ENCODE measurements at regions of chr19 and their contacts with region 1.

Region 1: GRCh38 chr19:11798391-11799330 is at the start of gene ZNF491:
- DNase-seq: peak; percentile 95 to 96
- H3K4me3 ChIP-seq: peak within 1 kb of the TSS; percentile 65 to 82
- H3K27ac ChIP-seq: peak within 1 kb of the TSS; percentile 80 to 84
- H3K4me1 ChIP-seq: peaks cover 0 to 20% (median 13%) of the 10 kb centered on the region in 4 donors
- H3K27me3 ChIP-seq: no peaks in the 10 kb centered on the region
- CTCF ChIP-seq: peak in 1 of 2 experiments; percentile 15

Region 2: DNA sequence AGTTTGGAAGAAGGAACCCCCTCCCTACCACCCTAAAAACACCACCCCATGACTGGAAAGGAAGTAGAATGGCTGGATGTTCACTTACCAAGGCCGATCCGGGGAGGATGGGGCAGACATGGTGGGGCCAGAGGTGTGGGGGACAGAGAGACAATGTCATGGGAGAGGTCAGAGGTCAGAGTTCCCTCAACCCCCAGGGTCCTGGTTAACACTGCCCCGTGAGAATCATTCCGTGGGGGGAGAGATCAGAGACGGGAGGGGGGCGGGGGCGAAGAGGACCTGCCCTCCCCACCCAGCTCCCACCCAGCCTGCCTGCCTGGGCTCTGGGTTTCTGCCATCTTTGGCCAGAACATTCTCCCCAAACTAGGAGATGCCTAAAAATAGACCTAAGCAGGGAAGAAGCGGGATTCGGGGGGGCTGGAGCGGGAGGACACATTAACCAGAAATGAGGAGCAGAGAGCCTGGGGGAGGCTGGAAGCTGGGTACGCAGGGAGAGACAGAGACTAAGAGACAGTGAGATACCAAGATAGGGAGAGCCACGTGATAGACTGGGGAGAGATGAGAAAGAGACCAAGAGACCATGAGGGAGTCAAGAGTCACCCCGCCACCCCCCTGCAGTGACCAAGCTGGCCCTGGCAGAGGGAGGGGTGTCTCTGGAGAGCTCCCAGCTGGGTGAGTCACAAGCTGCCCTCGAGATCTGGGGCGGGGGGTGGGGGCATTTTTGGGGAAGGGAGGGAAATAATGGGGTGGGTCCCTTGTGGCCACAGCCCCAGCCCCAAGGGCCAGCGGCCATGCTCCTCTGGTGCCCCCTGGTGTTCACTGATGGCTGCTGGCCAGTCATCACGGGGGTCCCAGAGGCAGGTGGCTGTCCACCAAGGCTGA is 595.2 kb before region 1 on chr19:
- intact Hi-C with region 1: no loop called
- DNase-seq: peak; percentile 87 to 96
- H3K4me3 ChIP-seq: peak overlapping the region; percentile 18 to 30
- H3K27ac ChIP-seq: peak overlapping the region; percentile 94 to 98
- H3K4me1 ChIP-seq: peaks cover 0 to 56% (median 39%) of the 10 kb centered on the region in 4 donors
- H3K27me3 ChIP-seq: no peaks in the 10 kb centered on the region
- CTCF ChIP-seq: peak; percentile 89 to 97

Region 3: GRCh38 chr19:11843722-11844121 is 45.1 kb after region 1 on chr19:
- intact Hi-C with region 1: no loop called
- DNase-seq: no peak
- H3K4me3 ChIP-seq: no peak overlapping the region
- H3K27ac ChIP-seq: no peak overlapping the region
- H3K4me1 ChIP-seq: peaks cover 0 to 6% (median 2%) of the 10 kb centered on the region in 4 donors
- H3K27me3 ChIP-seq: no peaks in the 10 kb centered on the region
- CTCF ChIP-seq: no peak

Region 4: DNA sequence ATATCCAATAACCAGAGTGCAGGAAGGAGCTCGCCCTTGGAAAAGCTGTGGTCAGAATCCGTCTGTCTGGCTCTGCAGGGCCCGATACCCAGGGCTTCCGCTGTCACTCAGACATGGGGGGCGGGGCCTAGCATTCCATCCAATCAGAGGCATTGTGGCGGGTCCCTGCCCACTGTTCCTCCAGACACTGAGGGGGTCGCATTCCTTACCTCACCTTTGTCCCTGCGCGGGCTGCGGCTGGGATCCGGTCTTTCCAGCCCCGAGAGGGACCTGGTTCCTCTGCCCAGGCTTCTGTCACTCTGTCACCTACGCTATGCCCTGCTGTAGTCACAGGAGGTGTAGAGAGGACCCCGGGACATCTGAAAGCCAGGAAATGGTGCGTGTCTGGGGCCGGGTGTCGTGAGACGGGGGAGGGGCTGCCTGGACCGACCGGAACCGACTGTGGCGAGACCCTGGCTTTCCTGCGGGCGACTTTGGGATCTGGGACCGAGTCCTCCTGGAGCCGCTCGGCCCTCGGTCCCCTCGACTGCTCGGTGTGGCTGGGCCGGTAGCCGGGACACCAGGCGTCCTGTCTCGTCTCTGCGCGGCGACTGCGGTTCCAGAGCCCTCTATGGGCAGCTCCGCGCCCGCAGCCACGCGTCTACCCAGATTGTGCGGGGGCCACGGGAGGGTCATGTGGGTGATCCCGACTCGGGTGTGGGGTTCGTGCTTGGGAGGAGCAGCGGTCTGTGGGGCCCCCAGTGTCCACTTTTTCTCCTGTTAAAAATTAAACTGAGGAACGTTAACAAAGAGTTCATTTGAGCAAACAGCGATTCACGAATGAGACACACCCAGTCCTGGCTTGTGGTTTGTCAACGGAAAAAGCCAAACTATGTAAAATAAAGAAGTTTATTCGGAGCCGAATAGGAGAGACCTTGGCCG is 89.2 kb after region 1 on chr19 and contains the start of gene ZNF69:
- intact Hi-C with region 1: loop called (anchors 10 kb)
- DNase-seq: peak; percentile 92 to 94
- H3K4me3 ChIP-seq: peak within 1 kb of the TSS; percentile 75 to 87
- H3K27ac ChIP-seq: peak within 1 kb of the TSS; percentile 93 to 95
- H3K4me1 ChIP-seq: peaks cover 0 to 17% (median 7%) of the 10 kb centered on the region in 4 donors
- H3K27me3 ChIP-seq: no peaks in the 10 kb centered on the region
- CTCF ChIP-seq: peak; percentile 28

Region 5: DNA sequence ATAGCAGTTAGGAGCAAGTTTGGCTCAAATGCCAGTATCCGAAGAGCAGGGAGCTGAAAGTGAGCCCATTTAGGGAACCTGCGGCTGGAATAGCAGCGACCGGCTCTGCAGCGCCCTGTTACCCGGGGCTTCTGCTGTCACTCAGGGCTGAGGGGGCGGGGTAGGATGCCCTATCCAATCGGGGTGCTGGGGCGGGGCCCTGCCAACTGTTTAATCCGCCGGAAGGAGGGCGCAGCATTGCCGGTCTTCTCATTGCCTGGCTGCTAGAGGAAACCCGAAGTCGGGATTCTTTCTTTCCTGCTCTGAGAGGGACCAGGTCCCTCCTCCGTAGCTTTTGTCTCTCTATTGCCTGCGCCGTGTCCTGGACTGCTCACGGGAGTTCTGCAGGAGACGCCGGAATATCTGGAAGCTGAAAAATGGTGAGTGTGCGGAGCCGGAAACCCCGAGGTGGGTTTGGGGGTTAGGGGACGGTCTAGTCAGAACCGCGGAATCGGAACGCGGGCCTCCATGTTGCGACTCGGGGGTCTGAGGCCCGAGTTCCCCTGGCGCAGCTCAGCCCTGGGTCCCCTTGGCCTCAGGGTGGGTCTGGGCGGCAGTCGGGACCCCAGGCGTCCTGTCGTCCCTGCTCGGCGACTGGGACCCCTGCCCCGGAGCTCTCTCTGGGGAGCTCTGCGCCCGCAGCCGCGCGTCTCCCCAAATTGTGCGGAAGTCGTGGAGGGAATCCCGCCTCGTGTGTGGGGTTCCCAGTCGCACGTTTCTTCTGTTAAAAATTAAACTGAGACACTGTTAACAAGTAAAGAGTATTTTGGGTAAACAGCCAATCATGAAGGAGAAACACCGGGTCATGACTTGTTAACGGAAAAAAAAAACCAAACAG is 189.0 kb after region 1 on chr19:
- intact Hi-C with region 1: loop called (anchors 5 kb)
- DNase-seq: peak; percentile 98 to 99
- H3K4me3 ChIP-seq: peak overlapping the region; percentile 69 to 79
- H3K27ac ChIP-seq: peak overlapping the region; percentile 81 to 86
- H3K4me1 ChIP-seq: no peaks in the 10 kb centered on the region
- H3K27me3 ChIP-seq: no peaks in the 10 kb centered on the region
- CTCF ChIP-seq: peak in 1 of 2 experiments; percentile 13

Measured in tibial artery (tissue), 4 donors.